ENCODE measurements at regions of chr5 and their contacts with region 1.

Region 1: DNA sequence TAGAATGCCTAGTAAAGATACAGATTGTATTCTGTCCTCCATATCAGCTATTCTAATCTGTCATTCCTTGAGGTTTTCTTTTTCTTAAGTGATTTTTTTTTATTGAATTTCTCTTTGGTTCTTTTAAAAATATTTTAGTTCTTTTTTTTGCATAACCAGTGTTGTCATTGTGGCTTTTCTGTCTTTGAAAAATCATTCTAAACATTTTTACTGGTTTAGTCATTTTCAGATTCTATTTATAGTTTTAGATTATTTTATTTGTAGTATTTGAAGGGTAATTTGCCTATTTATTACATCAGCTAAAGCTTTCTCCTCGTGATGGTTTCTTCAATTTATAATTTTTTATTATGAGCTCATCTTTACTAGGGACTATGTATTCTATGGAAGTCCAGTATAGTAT is 78.1 kb downstream of the NDUFAF2 start:
- DNase-seq: no peak
- H3K4me3 ChIP-seq: no peak overlapping the region
- H3K27ac ChIP-seq: no peak overlapping the region
- H3K4me1 ChIP-seq: peaks cover 9% of the 10 kb centered on the region
- H3K27me3 ChIP-seq: no peaks in the 10 kb centered on the region
- CTCF ChIP-seq: no peak
- POLR2A ChIP-seq: no peak

Region 2: DNA sequence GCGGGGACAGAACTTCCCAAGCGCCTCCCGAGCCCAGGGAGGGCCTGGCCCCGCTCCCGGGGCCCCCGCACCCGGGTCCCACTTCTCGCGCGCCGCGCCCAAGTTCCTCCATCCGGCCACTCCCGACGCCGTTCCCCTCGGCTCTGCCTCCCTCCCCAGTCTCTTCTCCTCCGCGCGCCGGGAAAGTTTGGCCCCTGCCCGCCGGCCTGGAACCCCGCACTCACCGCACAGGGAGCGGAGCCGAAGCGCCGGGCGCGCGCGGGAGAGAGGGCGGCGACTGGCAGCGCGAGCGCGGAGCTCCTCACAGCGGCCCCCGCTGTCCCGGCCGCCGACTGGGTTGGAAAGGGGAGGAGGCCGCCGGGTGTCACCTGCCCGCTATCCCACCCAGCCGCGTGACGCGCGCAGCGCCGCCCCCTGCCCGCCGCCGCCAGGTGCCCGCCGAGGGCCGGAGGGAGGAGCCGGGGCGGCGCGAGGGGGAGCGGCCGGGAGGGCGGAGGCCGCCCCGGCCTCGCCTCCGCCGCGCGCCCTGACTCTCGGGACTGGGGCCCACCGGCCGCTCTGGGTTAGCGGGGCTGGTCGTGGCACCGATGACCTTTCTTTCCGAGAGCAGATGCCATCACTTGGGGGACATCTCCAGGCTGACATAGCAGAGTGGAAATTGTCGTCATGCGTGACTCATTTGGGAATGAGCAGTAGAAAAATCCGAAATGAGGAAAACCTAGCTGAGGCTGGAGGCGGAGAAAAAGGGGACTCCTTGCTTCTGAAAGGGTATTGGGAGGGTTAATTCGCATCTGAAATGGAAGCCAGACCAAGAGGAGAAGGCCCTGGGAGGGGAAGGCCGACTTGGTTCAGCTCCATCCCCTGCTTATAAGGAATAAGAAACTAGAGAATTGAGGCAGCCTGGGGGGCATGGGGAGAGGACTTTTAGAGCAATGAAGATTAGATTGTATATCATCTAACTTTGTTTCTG is 178.9 kb before region 1 on chr5 and contains the start of gene ELOVL7:
- CTCF ChIA-PET with region 1: no interaction called
- POLR2A ChIA-PET with region 1: no interaction called
- dilution Hi-C with region 1: no loop called
- intact Hi-C with region 1: no loop called
- DNase-seq: peak; percentile 14
- H3K4me3 ChIP-seq: peak within 1 kb of the TSS; percentile 36 to 55 (median 39)
- H3K27ac ChIP-seq: no peak within 1 kb of the TSS
- H3K4me1 ChIP-seq: peaks cover 11% of the 10 kb centered on the region
- H3K27me3 ChIP-seq: peaks cover 36 to 72% of the 10 kb centered on the region in 2 experiments
- CTCF ChIP-seq: peak in 1 of 2 donors; percentile 52
- POLR2A ChIP-seq: no peak
- total RNA-seq, gene ELOVL7: 0.09 TPM in 1 of 2 replicates, not detected in the other

Region 3: GRCh38 chr5:61000887-61001286 is 22.2 kb before region 1 on chr5:
- CTCF ChIA-PET with region 1: interaction called, 11 read pairs
- POLR2A ChIA-PET with region 1: no interaction called
- dilution Hi-C with region 1: no loop called
- intact Hi-C with region 1: no loop called
- DNase-seq: no peak
- H3K4me3 ChIP-seq: no peak overlapping the region
- H3K27ac ChIP-seq: no peak overlapping the region
- H3K4me1 ChIP-seq: peaks cover 15% of the 10 kb centered on the region
- H3K27me3 ChIP-seq: no peaks in the 10 kb centered on the region
- CTCF ChIP-seq: no peak
- POLR2A ChIP-seq: no peak

Region 4: GRCh38 chr5:61044545-61044944 is 21.4 kb after region 1 on chr5:
- CTCF ChIA-PET with region 1: no interaction called
- POLR2A ChIA-PET with region 1: no interaction called
- dilution Hi-C with region 1: no loop called
- intact Hi-C with region 1: no loop called
- DNase-seq: no peak
- H3K4me3 ChIP-seq: no peak overlapping the region
- H3K27ac ChIP-seq: no peak overlapping the region
- H3K4me1 ChIP-seq: peaks cover 5% of the 10 kb centered on the region
- H3K27me3 ChIP-seq: no peaks in the 10 kb centered on the region
- CTCF ChIP-seq: no peak
- POLR2A ChIP-seq: no peak

Measured in endothelial cell of umbilical vein (primary cell).